ENCODE measurements at regions of chr3 and their contacts with region 1.

Region 1: GRCh38 chr3:179322286-179323196 is at the start of gene ZNF639:
- DNase-seq: peak; percentile 83 to 93
- H3K4me3 ChIP-seq: peak within 1 kb of the TSS; percentile 87
- H3K4me1 ChIP-seq: peaks cover 19% of the 10 kb centered on the region
- H3K27me3 ChIP-seq: no peaks in the 10 kb centered on the region

Region 2: DNA sequence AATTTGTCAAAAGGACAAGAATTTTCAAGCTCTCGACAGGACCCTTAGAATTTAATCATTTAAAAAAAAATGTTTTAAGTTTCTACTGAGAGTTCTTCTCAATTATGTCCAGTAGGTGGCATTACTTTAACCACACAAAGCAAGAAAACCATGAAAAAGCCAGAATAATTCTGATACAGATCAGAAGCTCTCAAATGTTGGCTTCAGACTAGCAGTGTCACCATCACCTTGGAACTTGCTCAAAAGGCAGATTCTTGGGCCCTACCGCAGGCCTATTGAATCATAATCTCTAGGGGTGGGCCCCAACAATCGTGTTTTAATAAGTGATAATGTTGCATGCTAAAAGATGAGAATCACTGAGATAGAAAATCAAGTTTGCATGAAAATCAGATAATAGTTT is 885.8 kb before region 1 on chr3:
- in situ Hi-C with region 1: loop called (anchors 25 kb)
- DNase-seq: peak in 1 of 2 experiments; percentile 70
- H3K4me3 ChIP-seq: no peak overlapping the region
- H3K4me1 ChIP-seq: peaks cover 25% of the 10 kb centered on the region
- H3K27me3 ChIP-seq: no peaks in the 10 kb centered on the region

Region 3: DNA sequence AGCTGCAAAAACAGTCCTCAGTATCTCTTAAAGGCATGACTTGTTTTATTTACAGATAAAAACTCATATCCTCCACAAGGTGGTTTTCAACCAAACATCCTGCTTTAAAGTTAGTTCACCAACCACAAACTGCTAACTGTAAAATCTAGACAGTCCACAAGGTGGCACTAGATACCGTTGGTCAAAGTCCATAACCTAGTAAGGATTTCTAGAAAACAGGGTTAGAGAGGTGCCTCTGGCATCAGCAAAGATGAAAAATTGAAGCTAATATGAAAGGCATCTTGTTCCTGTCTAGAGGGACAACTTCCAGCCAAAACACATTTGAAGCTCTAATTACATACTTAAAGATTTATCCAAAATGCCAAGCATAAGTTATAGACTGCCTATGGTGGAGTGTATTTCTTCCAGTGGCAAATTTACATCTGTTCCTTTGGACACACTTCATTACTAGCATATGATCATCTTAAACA is 307.0 kb before region 1 on chr3:
- in situ Hi-C with region 1: loop called (anchors 5 kb)
- DNase-seq: peak; percentile 73 to 74
- H3K4me3 ChIP-seq: no peak overlapping the region
- H3K4me1 ChIP-seq: peaks cover 14% of the 10 kb centered on the region
- H3K27me3 ChIP-seq: no peaks in the 10 kb centered on the region

Region 4: DNA sequence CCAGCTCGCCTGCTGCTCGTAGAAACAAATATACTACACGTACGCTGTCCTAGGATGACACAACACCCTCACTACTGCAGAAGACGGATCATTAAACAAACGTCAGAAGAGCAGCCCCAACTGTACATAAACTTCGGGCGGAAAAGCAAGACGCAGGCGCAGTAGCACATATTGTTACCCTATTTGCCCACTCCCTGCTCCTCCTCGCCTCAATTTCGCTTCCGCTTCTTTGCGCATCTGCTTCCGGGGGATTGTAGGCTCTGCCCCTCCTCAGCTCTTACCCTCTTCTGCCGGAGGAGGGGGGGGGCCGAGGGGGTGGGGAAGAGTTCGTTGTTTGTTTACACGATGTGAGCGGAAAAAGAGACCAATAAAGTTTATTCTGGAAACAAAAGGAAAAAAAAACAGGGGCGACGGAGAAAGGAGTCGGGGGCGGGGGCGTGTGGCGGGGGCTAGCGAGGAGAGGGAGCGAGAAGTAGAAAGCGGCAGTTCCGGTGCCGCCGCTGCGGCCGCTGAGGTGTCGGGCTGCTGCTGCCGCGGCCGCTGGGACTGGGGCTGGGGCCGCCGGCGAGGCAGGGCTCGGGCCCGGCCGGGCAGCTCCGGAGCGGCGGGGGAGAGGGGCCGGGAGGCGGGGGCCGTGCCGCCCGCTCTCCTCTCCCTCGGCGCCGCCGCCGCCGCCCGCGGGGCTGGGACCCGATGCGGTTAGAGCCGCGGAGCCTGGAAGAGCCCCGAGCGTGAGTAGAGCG is 174.5 kb before region 1 on chr3 and contains the start of gene PIK3CA:
- in situ Hi-C with region 1: loop called (anchors 25 kb)
- DNase-seq: peak; percentile 94 to 98
- H3K4me3 ChIP-seq: peak within 1 kb of the TSS; percentile 77
- H3K4me1 ChIP-seq: peaks cover 13% of the 10 kb centered on the region
- H3K27me3 ChIP-seq: no peaks in the 10 kb centered on the region

Region 5: DNA sequence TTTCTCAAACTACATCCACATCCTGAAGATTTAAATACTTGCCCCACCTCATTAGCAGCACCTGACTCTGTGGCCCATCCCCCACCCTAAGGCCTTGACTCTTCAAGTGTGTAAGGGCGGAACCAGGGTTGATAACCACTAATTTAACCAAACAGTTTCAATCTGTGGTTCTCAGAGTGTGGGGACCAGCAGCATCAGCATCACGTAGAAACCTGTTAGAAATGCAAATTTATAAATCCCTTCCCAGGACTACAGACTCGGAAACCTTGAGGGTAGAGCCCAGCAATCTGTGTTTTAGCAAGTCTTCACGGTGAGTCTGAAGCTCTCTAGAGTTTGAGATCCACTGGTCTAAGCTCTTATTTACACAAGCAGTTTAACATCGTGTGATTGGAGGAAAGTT is 116.3 kb after region 1 on chr3:
- in situ Hi-C with region 1: no loop called
- DNase-seq: no peak
- H3K4me3 ChIP-seq: no peak overlapping the region
- H3K4me1 ChIP-seq: peaks cover 11% of the 10 kb centered on the region
- H3K27me3 ChIP-seq: no peaks in the 10 kb centered on the region

Region 6: GRCh38 chr3:179526989-179527391 is 204.4 kb after region 1 on chr3:
- in situ Hi-C with region 1: no loop called
- DNase-seq: peak; percentile 67 to 73
- H3K4me3 ChIP-seq: no peak overlapping the region
- H3K4me1 ChIP-seq: peaks cover 9% of the 10 kb centered on the region
- H3K27me3 ChIP-seq: no peaks in the 10 kb centered on the region

Region 7: DNA sequence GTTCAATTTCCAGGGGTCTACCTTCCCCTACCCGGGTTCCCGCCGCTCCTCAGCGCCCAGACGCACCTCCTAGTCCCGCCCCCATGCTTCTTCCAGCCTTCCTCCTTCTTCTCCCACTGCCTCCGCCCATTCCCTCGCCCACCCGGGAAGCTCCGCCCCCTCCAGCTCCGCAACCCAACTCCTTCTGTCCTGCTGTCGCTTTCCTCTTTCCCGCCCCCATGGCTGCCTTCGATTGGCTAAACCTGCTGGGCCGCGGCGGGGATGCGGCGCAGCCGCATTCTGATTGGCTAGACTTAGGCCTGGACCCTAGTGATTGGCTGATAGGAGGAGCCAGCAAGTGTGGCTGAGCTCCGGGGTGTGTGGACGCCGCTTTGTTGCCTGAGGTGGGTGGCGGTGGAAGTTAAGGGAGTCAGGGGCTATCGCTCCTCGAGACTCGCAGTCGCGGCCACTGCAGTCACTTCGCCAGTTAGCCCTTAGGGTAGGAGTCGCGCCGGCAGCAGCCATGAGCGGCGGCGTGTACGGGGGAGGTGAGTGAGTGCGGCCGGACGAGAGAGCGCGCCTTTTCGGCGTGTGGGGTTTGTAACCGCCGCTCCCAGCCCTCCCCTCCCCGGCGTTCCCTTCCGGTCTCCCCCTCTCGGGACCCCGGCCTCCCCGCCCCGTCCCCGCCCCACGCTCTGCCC is 240.2 kb after region 1 on chr3 and contains the start of gene ACTL6A:
- in situ Hi-C with region 1: loop called (anchors 10 kb)
- DNase-seq: peak; percentile 98 to 100
- H3K4me3 ChIP-seq: peak within 1 kb of the TSS; percentile 94
- H3K4me1 ChIP-seq: peaks cover 6% of the 10 kb centered on the region
- H3K27me3 ChIP-seq: no peaks in the 10 kb centered on the region